ENCODE measurements at regions of chr7 and their contacts with region 1.

Region 1: GRCh38 chr7:94301024-94301586 is 93.6 kb upstream of the COL1A2 start:
- DNase-seq: peak; percentile 89 to 93
- ATAC-seq: peak; percentile 88
- H3K4me3 ChIP-seq: no peak overlapping the region
- H3K27ac ChIP-seq: peak overlapping the region; percentile 87 to 100
- H3K4me1 ChIP-seq: peaks cover 10 to 19% of the 10 kb centered on the region in 2 donors
- H3K27me3 ChIP-seq: no peaks in the 10 kb centered on the region

Region 2: GRCh38 chr7:94348142-94348541 is 47.0 kb after region 1 on chr7:
- intact Hi-C with region 1: loop called in 1 of 2 experiments (anchors 5 kb)
- DNase-seq: peak in 1 of 2 donors; percentile 61
- ATAC-seq: peak; percentile 90
- H3K4me3 ChIP-seq: peak overlapping the region in 1 of 2 donors; percentile 48
- H3K27ac ChIP-seq: peak overlapping the region; percentile 63 to 76
- H3K4me1 ChIP-seq: peaks cover 0 to 3% of the 10 kb centered on the region in 2 donors
- H3K27me3 ChIP-seq: no peaks in the 10 kb centered on the region

Region 3: GRCh38 chr7:94355454-94355853 is 54.3 kb after region 1 on chr7:
- intact Hi-C with region 1: loop called in 1 of 2 experiments (anchors 5 kb)
- DNase-seq: peak in 1 of 2 donors; percentile 44
- ATAC-seq: peak; percentile 8
- H3K4me3 ChIP-seq: no peak overlapping the region
- H3K27ac ChIP-seq: peak overlapping the region; percentile 13 to 67
- H3K4me1 ChIP-seq: peaks cover 0 to 7% of the 10 kb centered on the region in 2 donors
- H3K27me3 ChIP-seq: no peaks in the 10 kb centered on the region